SK-N-SH (cell line): ENCODE measurements at regions of chr6 and their contacts with region 1.

Region 1: GRCh38 chr6:36245572-36246061 is 24.2 kb upstream of the PNPLA1 start:
- DNase-seq: peak; percentile 65
- H3K4me3 ChIP-seq: no peak overlapping the region
- H3K27ac ChIP-seq: peak overlapping the region in 1 of 2 experiments; percentile 66; a peak in 1 of 4 replicates
- H3K4me1 ChIP-seq: peaks cover 0 to 18% of the 10 kb centered on the region in 2 experiments; a peak in 1 of 4 replicates
- H3K27me3 ChIP-seq: no peaks in the 10 kb centered on the region
- CTCF ChIP-seq: no peak
- EP300 ChIP-seq: no peak
- RAD21 ChIP-seq: peak; percentile 33; the same call in 1 of the 2 replicates

Region 2: DNA sequence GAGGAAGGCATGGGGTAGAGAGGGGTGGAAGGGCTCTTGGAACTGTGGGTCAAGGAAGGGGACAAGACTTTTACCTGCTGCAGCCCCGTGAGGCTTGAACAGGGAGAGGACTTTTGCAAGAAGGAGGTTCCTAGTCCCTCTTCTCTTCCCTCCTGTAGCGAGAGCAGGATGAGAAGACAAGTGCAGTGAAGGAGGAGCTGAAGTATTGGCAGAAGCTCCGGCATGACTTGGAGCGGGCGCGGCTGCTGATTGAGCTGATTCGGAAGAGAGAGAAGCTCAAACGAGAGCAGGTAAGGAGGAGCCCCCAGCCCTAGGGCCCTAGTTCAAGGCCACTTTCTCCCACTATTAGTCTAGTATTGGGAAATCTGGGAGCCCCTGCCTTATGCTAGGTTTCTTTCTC is 38.5 kb before region 1 on chr6:
- CTCF ChIA-PET with region 1: interaction called, 18 read pairs
- POLR2A ChIA-PET with region 1: no interaction called
- DNase-seq: no peak
- H3K4me3 ChIP-seq: no peak overlapping the region
- H3K27ac ChIP-seq: no peak overlapping the region
- H3K4me1 ChIP-seq: no peaks in the 10 kb centered on the region; a peak in 1 of 4 replicates
- H3K27me3 ChIP-seq: no peaks in the 10 kb centered on the region
- CTCF ChIP-seq: no peak
- EP300 ChIP-seq: no peak
- RAD21 ChIP-seq: no peak

Region 3: GRCh38 chr6:36319436-36319762 is 73.8 kb after region 1 on chr6:
- CTCF ChIA-PET with region 1: no interaction called
- POLR2A ChIA-PET with region 1: no interaction called
- DNase-seq: no peak
- H3K4me3 ChIP-seq: no peak overlapping the region
- H3K27ac ChIP-seq: no peak overlapping the region
- H3K4me1 ChIP-seq: peaks cover 0 to 8% of the 10 kb centered on the region in 2 experiments; a peak in 1 of 4 replicates
- H3K27me3 ChIP-seq: no peaks in the 10 kb centered on the region; the same call in 1 of the 2 replicates
- CTCF ChIP-seq: no peak
- EP300 ChIP-seq: no peak
- RAD21 ChIP-seq: no peak

Region 4: DNA sequence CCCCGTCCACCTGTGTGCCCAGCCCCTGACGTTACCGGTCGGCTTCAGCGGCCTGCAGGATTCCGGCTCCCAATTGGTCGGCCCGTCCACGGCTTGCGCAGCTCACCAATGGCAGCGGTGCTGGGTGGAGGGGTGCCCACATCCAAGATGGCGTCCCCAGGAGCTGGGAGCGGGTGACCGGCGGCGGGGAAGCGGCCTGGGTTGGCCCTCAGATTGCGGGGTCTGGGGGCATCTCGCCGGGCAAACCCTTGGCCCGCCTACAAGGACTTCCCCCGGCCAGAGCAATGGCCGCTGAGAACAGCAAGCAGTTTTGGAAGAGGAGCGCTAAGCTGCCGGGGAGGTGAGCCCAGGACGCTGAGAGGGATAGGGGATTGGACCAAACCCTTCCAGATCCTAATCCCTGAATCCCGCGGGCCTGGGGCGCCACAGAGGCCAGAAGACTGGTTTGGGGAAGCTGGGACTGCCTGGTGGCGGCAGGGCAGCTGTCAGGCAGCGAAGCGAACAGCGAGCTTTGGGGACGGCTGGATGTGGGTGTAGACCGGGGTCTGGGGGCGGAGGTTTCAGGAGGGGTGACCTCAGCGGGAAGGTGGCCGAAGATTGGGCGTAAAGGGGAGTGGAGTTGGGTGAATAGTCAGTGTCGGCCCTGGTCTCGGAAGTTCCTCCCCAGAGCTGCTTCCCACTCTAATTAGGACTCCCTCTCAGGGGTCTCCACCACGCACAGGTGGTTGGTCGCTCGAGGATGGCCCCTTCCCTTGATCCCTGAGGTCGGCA is 1012.2 kb after region 1 on chr6 and contains the starts of genes TBC1D22B and TMEM217:
- CTCF ChIA-PET with region 1: no interaction called
- POLR2A ChIA-PET with region 1: no interaction called
- DNase-seq: peak; percentile 97
- H3K4me3 ChIP-seq: peak within 1 kb of the TSS; percentile 65 to 91
- H3K27ac ChIP-seq: peak within 1 kb of the TSS; percentile 84 to 85
- H3K4me1 ChIP-seq: peaks cover 10 to 11% of the 10 kb centered on the region in 2 experiments; a peak in 3 of 4 replicates
- H3K27me3 ChIP-seq: no peaks in the 10 kb centered on the region
- CTCF ChIP-seq: no peak
- EP300 ChIP-seq: no peak
- RAD21 ChIP-seq: no peak
- polyA plus RNA-seq, gene TBC1D22B: 5.3 and 5.5 TPM in 2 replicates
- polyA plus RNA-seq, gene TMEM217: 1.5 and 2.0 TPM in 2 replicates